ENCODE measurements at regions of chr3 and their contacts with region 1.

Region 1: GRCh38 chr3:39531650-39532049 is 64.2 kb downstream of the MOBP start:
- DNase-seq: peak; percentile 96
- H3K4me3 Mint-ChIP-seq: no peak overlapping the region
- H3K27ac Mint-ChIP-seq: peak overlapping the region; percentile 34
- H3K4me1 Mint-ChIP-seq: peaks cover 22% of the 10 kb centered on the region
- H3K27me3 Mint-ChIP-seq: no peaks in the 10 kb centered on the region
- CTCF ChIP-seq: no peak

Region 2: GRCh38 chr3:39428745-39429201 is 102.9 kb before region 1 on chr3:
- CTCF ChIA-PET with region 1: no interaction called
- POLR2A ChIA-PET with region 1: no interaction called
- intact Hi-C with region 1: no loop called
- DNase-seq: no peak
- H3K4me3 Mint-ChIP-seq: no peak overlapping the region
- H3K27ac Mint-ChIP-seq: no peak overlapping the region
- H3K4me1 Mint-ChIP-seq: peaks cover 2% of the 10 kb centered on the region
- H3K27me3 Mint-ChIP-seq: no peaks in the 10 kb centered on the region
- CTCF ChIP-seq: no peak

Region 3: DNA sequence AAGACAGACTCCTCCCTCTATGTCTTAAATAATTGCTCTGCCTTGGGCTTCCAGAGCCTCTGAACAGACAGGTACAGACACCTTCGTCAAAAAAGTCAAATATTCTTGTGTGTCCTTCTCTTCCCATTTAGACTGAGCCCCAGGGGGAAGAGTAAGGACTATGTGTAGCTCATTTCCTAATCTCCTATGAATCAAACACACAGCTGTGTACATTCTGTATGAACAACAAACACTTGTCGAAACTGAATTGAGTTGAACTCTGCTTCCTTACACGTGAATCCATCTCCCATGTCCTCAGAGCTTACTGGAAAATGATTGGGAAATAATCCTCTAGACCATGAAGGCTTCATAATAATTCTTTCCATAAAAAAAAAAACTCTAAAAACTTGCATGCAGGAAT is 16.6 kb after region 1 on chr3:
- CTCF ChIA-PET with region 1: interaction called, 3 read pairs
- POLR2A ChIA-PET with region 1: interaction called, 14 read pairs
- intact Hi-C with region 1: no loop called
- DNase-seq: peak; percentile 89
- H3K4me3 Mint-ChIP-seq: peak overlapping the region; percentile 24
- H3K27ac Mint-ChIP-seq: peak overlapping the region; percentile 93
- H3K4me1 Mint-ChIP-seq: peaks cover 10% of the 10 kb centered on the region
- H3K27me3 Mint-ChIP-seq: no peaks in the 10 kb centered on the region
- CTCF ChIP-seq: no peak